ENCODE measurements at regions of chr12 and their contacts with region 1.

Region 1: GRCh38 chr12:107607464-107608392 is 77.9 kb upstream of the PWP1 start:
- DNase-seq: peak; percentile 68
- ATAC-seq: peak; percentile 60
- H3K4me3 Mint-ChIP-seq: no peak overlapping the region
- H3K27ac Mint-ChIP-seq: no peak overlapping the region
- H3K4me1 Mint-ChIP-seq: no peaks in the 10 kb centered on the region
- H3K27me3 Mint-ChIP-seq: no peaks in the 10 kb centered on the region
- CTCF ChIP-seq: peak; percentile 53

Region 2: GRCh38 chr12:106386813-106387535 is 1220.8 kb before region 1 on chr12:
- CTCF ChIA-PET with region 1: interaction called, 6 read pairs
- POLR2A ChIA-PET with region 1: no interaction called
- intact Hi-C with region 1: loop called (anchors 1 kb)
- DNase-seq: no peak
- ATAC-seq: no peak
- H3K4me3 Mint-ChIP-seq: no peak overlapping the region
- H3K27ac Mint-ChIP-seq: no peak overlapping the region
- H3K4me1 Mint-ChIP-seq: no peaks in the 10 kb centered on the region
- H3K27me3 Mint-ChIP-seq: peaks cover 4% of the 10 kb centered on the region
- CTCF ChIP-seq: no peak

Region 3: DNA sequence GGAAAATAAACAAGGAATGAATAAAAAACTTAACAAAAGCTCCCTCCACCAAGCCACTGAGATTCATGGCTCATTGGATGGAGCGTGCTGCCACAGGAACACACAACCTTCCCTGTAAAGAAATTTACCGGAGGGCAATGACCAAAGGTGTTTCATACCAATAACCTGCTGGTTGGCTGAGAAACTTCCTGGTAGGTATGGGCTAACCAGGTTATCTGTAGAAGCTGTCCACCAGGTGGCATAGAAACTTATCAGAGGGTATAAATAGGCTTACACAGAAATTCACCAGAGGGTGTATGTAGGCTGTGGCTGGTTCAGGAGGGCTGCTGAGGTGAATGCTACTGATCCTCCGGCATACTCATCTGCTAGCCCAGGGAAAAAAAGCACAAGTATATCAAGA is 593.7 kb before region 1 on chr12:
- CTCF ChIA-PET with region 1: no interaction called
- POLR2A ChIA-PET with region 1: no interaction called
- intact Hi-C with region 1: no loop called
- DNase-seq: no peak
- ATAC-seq: no peak
- H3K4me3 Mint-ChIP-seq: no peak overlapping the region
- H3K27ac Mint-ChIP-seq: no peak overlapping the region
- H3K4me1 Mint-ChIP-seq: no peaks in the 10 kb centered on the region
- H3K27me3 Mint-ChIP-seq: peaks cover 2% of the 10 kb centered on the region
- CTCF ChIP-seq: no peak

Region 4: GRCh38 chr12:107079172-107080011 is 528.3 kb before region 1 on chr12:
- CTCF ChIA-PET with region 1: interaction called, 4 read pairs
- POLR2A ChIA-PET with region 1: no interaction called
- intact Hi-C with region 1: loop called (anchors 1 kb)
- DNase-seq: no peak
- ATAC-seq: no peak
- H3K4me3 Mint-ChIP-seq: no peak overlapping the region
- H3K27ac Mint-ChIP-seq: no peak overlapping the region
- H3K4me1 Mint-ChIP-seq: no peaks in the 10 kb centered on the region
- H3K27me3 Mint-ChIP-seq: peaks cover 10% of the 10 kb centered on the region
- CTCF ChIP-seq: no peak

Region 5: DNA sequence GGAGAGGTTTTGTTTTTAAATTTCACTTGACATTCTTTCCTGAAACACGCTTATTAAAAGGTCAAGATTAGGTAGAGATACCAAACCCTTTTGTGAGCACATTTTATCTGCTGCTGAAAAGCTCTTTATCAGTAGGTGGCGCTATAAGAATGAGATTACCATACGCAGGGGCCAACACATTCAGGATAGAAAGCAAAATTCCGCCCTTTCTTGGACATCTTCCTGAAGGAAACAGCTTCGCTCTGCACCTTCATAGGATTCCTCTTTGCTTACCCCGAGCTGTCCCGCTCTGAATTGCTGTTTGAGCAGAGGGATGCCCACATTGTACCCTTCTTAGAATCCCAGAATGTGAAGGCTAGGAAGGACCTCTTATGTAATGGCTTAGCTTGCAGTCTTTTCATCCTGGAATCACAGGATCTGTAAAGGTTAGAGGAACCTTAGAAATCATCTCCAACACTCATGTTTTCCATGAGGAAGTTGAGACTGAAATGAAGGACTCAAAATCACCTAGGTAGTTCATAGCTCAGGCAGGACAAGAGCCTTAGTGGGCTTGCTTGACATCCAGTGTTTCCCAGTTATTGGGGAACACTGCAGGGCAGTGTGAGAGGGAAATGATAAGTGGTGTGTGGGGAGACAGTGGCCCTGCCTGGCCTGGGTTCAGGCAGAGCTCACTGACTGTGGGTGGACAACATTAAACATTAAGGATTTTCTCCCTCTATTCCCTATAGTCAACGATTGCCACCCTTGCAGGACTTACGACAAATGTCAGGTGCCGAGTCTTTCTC is 475.7 kb before region 1 on chr12:
- CTCF ChIA-PET with region 1: interaction called, 159 read pairs
- POLR2A ChIA-PET with region 1: no interaction called
- intact Hi-C with region 1: loop called (anchors 1 kb)
- DNase-seq: no peak
- ATAC-seq: no peak
- H3K4me3 Mint-ChIP-seq: no peak overlapping the region
- H3K27ac Mint-ChIP-seq: no peak overlapping the region
- H3K4me1 Mint-ChIP-seq: no peaks in the 10 kb centered on the region
- H3K27me3 Mint-ChIP-seq: no peaks in the 10 kb centered on the region
- CTCF ChIP-seq: no peak

Region 6: GRCh38 chr12:107402041-107403022 is 205.4 kb before region 1 on chr12:
- CTCF ChIA-PET with region 1: no interaction called
- POLR2A ChIA-PET with region 1: no interaction called
- intact Hi-C with region 1: loop called (anchors 5 kb)
- DNase-seq: no peak
- ATAC-seq: no peak
- H3K4me3 Mint-ChIP-seq: no peak overlapping the region
- H3K27ac Mint-ChIP-seq: no peak overlapping the region
- H3K4me1 Mint-ChIP-seq: no peaks in the 10 kb centered on the region
- H3K27me3 Mint-ChIP-seq: no peaks in the 10 kb centered on the region
- CTCF ChIP-seq: no peak

Region 7: DNA sequence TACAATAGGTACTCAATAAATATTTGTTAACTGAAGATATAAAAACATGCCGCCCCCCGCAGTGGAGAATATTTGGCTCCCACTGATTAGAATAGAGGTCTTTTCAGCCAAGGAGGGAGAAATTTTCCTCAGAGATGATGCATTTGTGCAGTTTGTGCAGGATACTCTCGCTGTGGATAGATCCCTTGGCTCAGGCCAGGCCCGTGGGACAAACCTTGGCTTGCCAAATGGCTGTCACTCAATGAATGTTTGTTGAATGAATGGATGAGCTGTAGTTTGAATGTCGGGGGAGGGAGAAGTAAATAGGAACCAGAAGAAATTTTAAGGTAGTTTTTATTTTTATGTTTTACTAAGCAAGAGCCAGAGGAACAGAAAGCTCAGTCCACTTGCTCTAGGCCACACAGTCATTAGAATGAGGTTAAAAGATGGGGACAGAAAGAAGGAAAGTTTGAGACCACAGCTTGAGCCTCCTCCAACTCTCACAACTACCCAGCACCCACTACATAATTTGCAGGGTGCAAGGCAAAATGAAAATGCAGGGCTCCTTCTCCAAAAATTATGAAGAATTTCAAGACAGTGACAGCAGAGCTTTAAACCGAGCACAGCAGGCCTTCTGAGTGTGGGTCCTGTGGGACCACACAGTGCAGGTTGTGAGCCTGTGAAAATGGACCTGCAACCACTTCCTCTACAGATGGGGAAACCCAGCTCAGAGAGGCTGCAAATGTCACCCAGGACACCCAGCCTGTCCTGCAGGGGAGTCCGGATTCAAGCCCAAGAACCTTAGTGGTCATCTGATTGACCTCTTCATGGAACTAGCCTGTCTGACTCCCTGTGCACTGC is 572.7 kb after region 1 on chr12:
- CTCF ChIA-PET with region 1: no interaction called
- POLR2A ChIA-PET with region 1: no interaction called
- intact Hi-C with region 1: no loop called
- DNase-seq: no peak
- ATAC-seq: peak; percentile 49
- H3K4me3 Mint-ChIP-seq: no peak overlapping the region
- H3K27ac Mint-ChIP-seq: no peak overlapping the region
- H3K4me1 Mint-ChIP-seq: peaks cover 9% of the 10 kb centered on the region
- H3K27me3 Mint-ChIP-seq: no peaks in the 10 kb centered on the region
- CTCF ChIP-seq: no peak

Region 8: GRCh38 chr12:108253540-108253939 is 645.8 kb after region 1 on chr12:
- CTCF ChIA-PET with region 1: no interaction called
- POLR2A ChIA-PET with region 1: no interaction called
- intact Hi-C with region 1: no loop called
- DNase-seq: no peak
- ATAC-seq: no peak
- H3K4me3 Mint-ChIP-seq: no peak overlapping the region
- H3K27ac Mint-ChIP-seq: no peak overlapping the region
- H3K4me1 Mint-ChIP-seq: no peaks in the 10 kb centered on the region
- H3K27me3 Mint-ChIP-seq: peaks cover 34% of the 10 kb centered on the region
- CTCF ChIP-seq: no peak

Measured in activated B cell treated with CpG ODN at 0.5 μM for 24 hours (primary cell).